GM23248 (cell line): ENCODE measurements at regions of chr1 and their contacts with region 1.

Region 1: GRCh38 chr1:234499119-234499942 is 20.4 kb upstream of the TARBP1 start:
- DNase-seq: peak; percentile 97
- H3K4me3 ChIP-seq: peak overlapping the region; percentile 61
- H3K27ac ChIP-seq: peak overlapping the region; percentile 99
- H3K4me1 ChIP-seq: peaks cover 47% of the 10 kb centered on the region
- H3K27me3 ChIP-seq: no peaks in the 10 kb centered on the region

Region 2: DNA sequence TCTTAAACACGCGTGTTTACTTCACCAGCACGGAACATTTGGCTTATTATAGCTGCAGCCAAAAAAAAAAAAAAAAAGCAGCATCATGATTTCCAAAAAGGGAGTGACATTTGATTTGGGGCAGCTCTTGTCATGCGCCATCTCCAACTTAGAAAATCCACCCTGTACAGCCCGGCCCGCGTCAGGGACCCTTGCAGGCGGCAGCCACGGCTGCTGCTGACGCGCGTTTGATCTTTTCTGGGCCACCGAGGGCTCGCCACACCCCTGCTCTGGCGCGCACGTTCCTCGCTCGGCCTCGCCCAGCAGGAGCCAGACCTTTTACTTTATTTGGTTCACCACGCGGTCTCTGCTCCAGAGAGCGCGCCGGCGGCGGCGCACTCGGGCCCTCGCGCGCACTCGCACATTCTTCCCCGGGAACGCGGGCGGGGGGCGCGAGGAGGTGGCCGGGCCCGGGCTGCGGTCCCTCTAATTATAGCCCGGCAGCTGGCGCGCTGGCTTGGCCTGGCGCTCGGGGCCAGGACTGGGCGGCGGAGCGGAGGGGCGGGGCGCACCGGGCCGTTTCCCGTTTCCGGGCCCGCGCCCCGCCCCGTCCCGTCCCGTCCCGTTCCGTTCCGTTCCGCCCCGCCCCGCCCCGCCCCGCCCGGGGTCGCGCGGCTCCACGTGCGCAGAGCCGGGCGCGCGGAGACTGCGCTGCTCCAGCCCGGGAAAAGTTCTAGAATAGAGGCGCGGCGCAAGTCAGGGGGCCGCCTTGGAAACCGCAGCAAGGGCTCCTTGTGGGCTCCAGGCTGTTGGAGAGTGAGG is 100.5 kb after region 1 on chr1:
- in situ Hi-C with region 1: loop called (anchors 10 kb)
- DNase-seq: peak; percentile 89
- H3K4me3 ChIP-seq: peak overlapping the region; percentile 94
- H3K27ac ChIP-seq: peak overlapping the region; percentile 93
- H3K4me1 ChIP-seq: peaks cover 53% of the 10 kb centered on the region
- H3K27me3 ChIP-seq: no peaks in the 10 kb centered on the region

Region 3: DNA sequence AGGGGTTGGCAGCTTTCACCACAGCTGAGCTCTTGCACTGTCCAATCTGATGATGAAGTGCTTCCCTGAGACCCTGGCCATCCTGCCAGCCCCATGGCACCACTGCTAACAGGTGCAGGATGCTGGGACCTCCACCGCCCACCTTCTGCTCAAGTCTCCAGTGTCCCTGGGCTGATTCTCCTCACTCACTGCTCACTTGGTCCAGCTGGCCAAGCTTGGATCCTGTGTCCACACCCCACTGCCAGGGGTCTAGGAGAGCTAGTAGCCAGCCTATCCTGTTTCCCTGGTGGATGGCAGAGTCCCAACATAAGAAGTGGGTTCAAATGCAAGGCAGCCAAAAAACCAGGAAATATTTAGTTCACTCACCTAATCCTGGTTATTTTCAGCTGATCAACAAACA is 327.9 kb after region 1 on chr1:
- in situ Hi-C with region 1: no loop called
- DNase-seq: no peak
- H3K4me3 ChIP-seq: no peak overlapping the region
- H3K27ac ChIP-seq: no peak overlapping the region
- H3K4me1 ChIP-seq: no peaks in the 10 kb centered on the region
- H3K27me3 ChIP-seq: no peaks in the 10 kb centered on the region